Right cardiac atrium (tissue), 5 donors: ENCODE measurements at regions of chr11 and their contacts with region 1.

Region 1: DNA sequence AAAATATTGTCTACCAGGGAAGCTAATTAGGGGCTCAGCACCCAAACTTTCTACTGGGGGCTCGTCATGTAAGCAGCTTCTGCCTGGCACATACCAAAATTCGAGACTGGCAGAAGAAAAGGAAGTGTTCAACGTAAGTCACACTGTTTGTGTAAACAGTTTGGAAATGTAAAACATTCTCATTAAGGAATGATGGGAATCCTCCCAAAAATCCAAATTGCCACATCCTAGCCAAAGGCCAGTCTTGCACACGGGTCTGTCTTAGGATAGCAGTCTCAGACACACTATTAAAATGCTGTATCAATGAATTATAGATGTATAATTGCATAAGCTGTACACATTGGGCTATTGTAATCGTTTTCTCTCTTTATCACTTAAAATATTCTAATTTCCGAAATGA is 28.9 kb downstream of the CUL5 start:
- DNase-seq: no peak
- ATAC-seq: no peak
- H3K4me3 ChIP-seq: no peak overlapping the region
- H3K27ac ChIP-seq: no peak overlapping the region
- H3K4me1 ChIP-seq: peaks cover 6% of the 10 kb centered on the region
- H3K27me3 ChIP-seq: no peaks in the 10 kb centered on the region

Region 2: GRCh38 chr11:108019870-108020540 is 17.6 kb before region 1 on chr11:
- intact Hi-C with region 1: loop called in 1 of 4 experiments (anchors 2 kb)
- DNase-seq: peak in 1 of 3 donors; percentile 54
- ATAC-seq: peak; percentile 28 to 55
- H3K4me3 ChIP-seq: no peak overlapping the region
- H3K27ac ChIP-seq: no peak overlapping the region
- H3K4me1 ChIP-seq: peaks cover 3% of the 10 kb centered on the region
- H3K27me3 ChIP-seq: no peaks in the 10 kb centered on the region